ENCODE measurements at regions of chr5 and their contacts with region 1.

Region 1: DNA sequence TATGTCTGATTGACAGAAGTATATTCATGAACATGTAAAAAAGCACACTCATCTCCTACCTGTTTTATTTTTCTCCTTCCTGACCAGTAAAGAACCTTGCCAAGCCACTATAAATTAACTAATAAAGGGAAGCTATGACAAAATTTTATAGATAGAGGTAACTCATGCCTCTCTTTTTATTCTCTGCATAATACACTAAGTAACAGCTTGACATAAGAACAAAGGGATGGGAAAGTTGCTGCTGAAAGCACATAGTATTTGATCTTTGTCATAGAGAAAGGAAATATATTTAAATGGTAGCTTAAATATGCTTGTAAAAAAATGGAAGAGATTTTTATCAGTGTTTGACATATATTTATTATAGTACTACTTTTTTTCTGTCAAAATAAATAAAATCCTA is 1065.7 kb upstream of the CDH9 start:
- DNase-seq: no peak
- ATAC-seq: peak; percentile 85
- H3K4me3 ChIP-seq: no peak overlapping the region
- H3K27ac ChIP-seq: no peak overlapping the region
- H3K4me1 ChIP-seq: no peaks in the 10 kb centered on the region
- H3K27me3 ChIP-seq: no peaks in the 10 kb centered on the region
- CTCF ChIP-seq: no peak

Region 2: GRCh38 chr5:28143519-28143918 is 39.4 kb after region 1 on chr5:
- CTCF ChIA-PET with region 1: no interaction called
- POLR2A ChIA-PET with region 1: no interaction called
- intact Hi-C with region 1: loop called (anchors 1 kb)
- DNase-seq: no peak
- ATAC-seq: peak; percentile 74
- H3K4me3 ChIP-seq: no peak overlapping the region
- H3K27ac ChIP-seq: no peak overlapping the region
- H3K4me1 ChIP-seq: no peaks in the 10 kb centered on the region
- H3K27me3 ChIP-seq: no peaks in the 10 kb centered on the region
- CTCF ChIP-seq: no peak